IMR-90 (cell line): ENCODE measurements at regions of chrX and their contacts with region 1.

Region 1: GRCh38 chrX:46758906-46759644 is at the start of gene SLC9A7:
- DNase-seq: peak; percentile 61
- ATAC-seq: peak; percentile 86
- H3K4me3 ChIP-seq: peak within 1 kb of the TSS; percentile 83
- H3K27ac ChIP-seq: peak within 1 kb of the TSS; percentile 33; the same call in 1 of the 2 replicates
- H3K4me1 ChIP-seq: peaks cover 5% of the 10 kb centered on the region
- H3K27me3 ChIP-seq: no peaks in the 10 kb centered on the region
- CTCF ChIP-seq: peak; percentile 77
- POLR2A ChIP-seq: no peak
- RAD21 ChIP-seq: peak; percentile 92
- total RNA-seq, gene SLC9A7: 67.5 and 76.4 TPM in 2 replicates

Region 2: GRCh38 chrX:46653482-46653881 is 105.6 kb before region 1 on chrX:
- CTCF ChIA-PET with region 1: no interaction called
- POLR2A ChIA-PET with region 1: no interaction called
- dilution Hi-C with region 1: no loop called
- in situ Hi-C with region 1: no loop called
- intact Hi-C with region 1: no loop called
- DNase-seq: peak; percentile 4
- ATAC-seq: no peak
- H3K4me3 ChIP-seq: no peak overlapping the region
- H3K27ac ChIP-seq: no peak overlapping the region
- H3K4me1 ChIP-seq: peaks cover 3% of the 10 kb centered on the region; the same call in 1 of the 2 replicates
- H3K27me3 ChIP-seq: peaks cover 3% of the 10 kb centered on the region; the same call in 1 of the 2 replicates
- CTCF ChIP-seq: no peak
- POLR2A ChIP-seq: no peak
- RAD21 ChIP-seq: no peak

Region 3: DNA sequence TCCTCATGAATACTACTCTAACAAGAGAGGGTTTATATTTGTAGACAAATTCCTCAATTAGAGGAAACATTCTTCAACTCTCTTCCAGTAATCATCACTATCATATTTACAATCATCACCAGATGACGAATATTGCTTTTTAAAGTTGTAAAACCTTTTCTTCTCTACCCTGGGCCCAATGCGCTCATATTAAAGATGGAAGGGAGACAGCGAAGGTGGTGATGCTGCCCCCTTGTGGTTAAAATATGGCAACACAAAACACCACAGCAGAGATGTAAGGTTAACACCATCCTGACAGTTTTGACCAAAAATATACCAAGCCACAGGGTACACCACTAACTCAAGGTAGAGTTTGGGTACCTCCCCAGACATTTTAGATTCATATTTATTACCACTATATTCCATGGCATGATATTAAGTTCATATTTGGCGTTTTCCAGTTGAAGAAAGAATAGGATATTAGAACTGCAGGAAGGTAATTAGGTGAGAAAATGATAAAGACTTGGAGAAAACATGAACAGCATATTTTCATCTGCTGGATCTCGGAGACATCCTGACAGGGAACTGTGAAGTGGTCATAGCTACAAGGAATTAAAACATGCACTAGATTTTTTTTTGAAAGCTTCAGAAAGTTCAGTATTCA is 73.0 kb before region 1 on chrX:
- CTCF ChIA-PET with region 1: interaction called, 5 read pairs
- POLR2A ChIA-PET with region 1: no interaction called
- dilution Hi-C with region 1: no loop called
- in situ Hi-C with region 1: no loop called
- intact Hi-C with region 1: loop called (anchors 2 kb)
- DNase-seq: peak; percentile 41
- ATAC-seq: peak; percentile 80
- H3K4me3 ChIP-seq: no peak overlapping the region
- H3K27ac ChIP-seq: no peak overlapping the region
- H3K4me1 ChIP-seq: peaks cover 5% of the 10 kb centered on the region; the same call in 1 of the 2 replicates
- H3K27me3 ChIP-seq: peaks cover 4% of the 10 kb centered on the region; the same call in 1 of the 2 replicates
- CTCF ChIP-seq: peak; percentile 61
- POLR2A ChIP-seq: no peak
- RAD21 ChIP-seq: peak; percentile 57

Region 4: DNA sequence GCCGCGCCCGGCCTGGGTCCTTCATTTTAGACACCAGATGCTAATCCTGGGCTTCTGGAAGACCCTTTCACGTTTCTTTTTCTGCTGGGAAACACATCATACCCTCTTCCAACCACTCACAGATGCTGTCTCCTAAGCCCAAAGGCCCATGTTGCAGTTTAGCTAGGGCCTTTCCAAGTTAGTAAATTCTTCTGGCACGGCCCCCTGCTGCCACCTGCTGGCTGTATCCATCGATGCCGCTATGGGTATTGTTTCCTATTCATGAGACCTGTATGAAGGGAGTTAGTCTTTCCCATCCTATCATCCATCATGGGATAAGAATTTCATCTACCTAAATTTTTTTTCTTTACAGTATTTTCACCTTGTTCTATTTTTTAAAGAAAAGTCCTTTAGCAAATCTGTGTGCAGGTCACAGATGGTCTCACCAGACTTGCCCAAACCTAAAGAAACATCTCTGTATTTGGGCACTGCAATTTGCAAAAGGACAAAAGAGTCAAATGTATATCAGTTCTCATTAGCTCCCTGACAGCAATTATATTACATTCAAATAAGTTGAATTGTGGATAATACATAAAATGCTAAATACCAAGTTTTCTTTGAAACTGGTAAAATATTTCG is 37.6 kb after region 1 on chrX:
- CTCF ChIA-PET with region 1: interaction called, 4 read pairs
- POLR2A ChIA-PET with region 1: no interaction called
- dilution Hi-C with region 1: no loop called
- in situ Hi-C with region 1: no loop called
- intact Hi-C with region 1: loop called (anchors 1 kb)
- DNase-seq: peak; percentile 64
- ATAC-seq: peak; percentile 71
- H3K4me3 ChIP-seq: no peak overlapping the region
- H3K27ac ChIP-seq: no peak overlapping the region
- H3K4me1 ChIP-seq: 0 out of 2 replicates have a peak, but pooled peaks cover 2% of the 10 kb centered on the region
- H3K27me3 ChIP-seq: no peaks in the 10 kb centered on the region; the same call in 1 of the 2 replicates
- CTCF ChIP-seq: peak; percentile 76
- POLR2A ChIP-seq: no peak
- RAD21 ChIP-seq: peak; percentile 90

Region 5: GRCh38 chrX:46912098-46912602 is 153.1 kb after region 1 on chrX and contains the start of gene JADE3:
- CTCF ChIA-PET with region 1: no interaction called
- POLR2A ChIA-PET with region 1: no interaction called
- dilution Hi-C with region 1: no loop called
- in situ Hi-C with region 1: no loop called
- intact Hi-C with region 1: loop called (anchors 10 kb)
- DNase-seq: peak; percentile 56
- ATAC-seq: peak; percentile 87
- H3K4me3 ChIP-seq: peak within 1 kb of the TSS; percentile 91
- H3K27ac ChIP-seq: peak within 1 kb of the TSS; percentile 7; the same call in 1 of the 2 replicates
- H3K4me1 ChIP-seq: no peaks in the 10 kb centered on the region
- H3K27me3 ChIP-seq: peaks cover 9% of the 10 kb centered on the region
- CTCF ChIP-seq: no peak
- POLR2A ChIP-seq: no peak
- RAD21 ChIP-seq: no peak
- total RNA-seq, gene JADE3: 4.4 and 4.7 TPM in 2 replicates

Region 6: GRCh38 chrX:47093248-47093647 is 334.2 kb after region 1 on chrX:
- CTCF ChIA-PET with region 1: no interaction called
- POLR2A ChIA-PET with region 1: no interaction called
- dilution Hi-C with region 1: no loop called
- in situ Hi-C with region 1: no loop called
- intact Hi-C with region 1: loop called (anchors 5 kb)
- DNase-seq: peak; percentile 55
- ATAC-seq: peak; percentile 65
- H3K4me3 ChIP-seq: no peak overlapping the region
- H3K27ac ChIP-seq: no peak overlapping the region
- H3K4me1 ChIP-seq: no peaks in the 10 kb centered on the region
- H3K27me3 ChIP-seq: peaks cover 11% of the 10 kb centered on the region
- CTCF ChIP-seq: peak; percentile 55
- POLR2A ChIP-seq: no peak
- RAD21 ChIP-seq: peak; percentile 61

Region 7: DNA sequence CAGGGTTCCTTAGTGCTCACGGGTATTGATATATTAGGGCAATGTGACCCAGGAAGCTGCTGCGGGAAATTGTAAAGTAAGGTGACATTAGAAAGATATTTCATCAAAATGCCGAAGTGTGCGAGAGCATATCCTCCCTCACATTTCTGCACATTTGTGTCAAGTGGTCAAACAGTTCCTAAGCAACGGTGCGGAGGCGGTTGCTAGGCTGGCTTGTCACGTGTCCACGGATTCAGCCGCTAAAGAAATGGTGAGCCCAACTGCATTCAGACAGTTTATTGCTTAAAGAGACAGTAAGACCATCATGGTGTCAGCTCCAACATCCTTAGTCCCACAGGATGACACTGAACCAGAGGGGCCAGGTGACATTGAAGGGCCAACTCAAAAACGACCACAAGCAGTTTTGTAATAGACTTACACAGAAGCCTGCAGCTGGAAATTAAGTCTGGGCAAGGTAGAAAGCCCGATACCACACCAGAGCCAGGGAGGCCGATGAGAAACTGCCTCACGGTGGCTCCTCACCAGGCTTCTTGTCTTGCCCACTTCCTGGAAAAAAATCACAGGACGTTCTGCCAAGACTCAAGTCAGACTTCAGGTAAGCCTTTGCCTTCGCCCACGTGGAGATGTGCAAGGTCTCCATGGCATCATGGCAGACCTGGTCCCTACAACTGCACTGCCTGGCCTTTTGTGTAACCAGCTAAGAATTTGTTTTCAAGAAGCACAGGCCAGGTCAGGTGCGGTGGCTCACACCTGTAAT is 524.1 kb after region 1 on chrX:
- CTCF ChIA-PET with region 1: no interaction called
- POLR2A ChIA-PET with region 1: no interaction called
- dilution Hi-C with region 1: no loop called
- in situ Hi-C with region 1: no loop called
- intact Hi-C with region 1: no loop called
- DNase-seq: peak; percentile 65
- ATAC-seq: peak; percentile 70
- H3K4me3 ChIP-seq: no peak overlapping the region
- H3K27ac ChIP-seq: no peak overlapping the region
- H3K4me1 ChIP-seq: peaks cover 4% of the 10 kb centered on the region
- H3K27me3 ChIP-seq: peaks cover 8% of the 10 kb centered on the region
- CTCF ChIP-seq: no peak
- POLR2A ChIP-seq: no peak
- RAD21 ChIP-seq: no peak